ENCODE measurements at regions of chrX and their contacts with region 1.

Region 1: GRCh38 chrX:48631350-48632090 is 34.2 kb downstream of the WDR13 start:
- DNase-seq: peak; percentile 88
- H3K4me3 ChIP-seq: no peak overlapping the region
- H3K27ac ChIP-seq: no peak overlapping the region
- H3K4me1 ChIP-seq: no peaks in the 10 kb centered on the region
- H3K27me3 ChIP-seq: no peaks in the 10 kb centered on the region
- CTCF ChIP-seq: peak; percentile 42 to 51
- POLR2A ChIP-seq: no peak

Region 2: GRCh38 chrX:48883729-48884128 is 252.2 kb after region 1 on chrX:
- CTCF ChIA-PET with region 1: no interaction called
- POLR2A ChIA-PET with region 1: no interaction called
- dilution Hi-C with region 1: no loop called
- intact Hi-C with region 1: no loop called
- DNase-seq: no peak
- H3K4me3 ChIP-seq: no peak overlapping the region
- H3K27ac ChIP-seq: no peak overlapping the region
- H3K4me1 ChIP-seq: no peaks in the 10 kb centered on the region
- H3K27me3 ChIP-seq: no peaks in the 10 kb centered on the region
- CTCF ChIP-seq: no peak
- POLR2A ChIP-seq: no peak

Region 3: GRCh38 chrX:48917139-48918001 is 285.9 kb after region 1 on chrX:
- CTCF ChIA-PET with region 1: no interaction called
- POLR2A ChIA-PET with region 1: no interaction called
- dilution Hi-C with region 1: no loop called
- intact Hi-C with region 1: loop called (anchors 1 kb)
- DNase-seq: peak; percentile 93
- H3K4me3 ChIP-seq: no peak overlapping the region
- H3K27ac ChIP-seq: no peak overlapping the region
- H3K4me1 ChIP-seq: peaks cover 2% of the 10 kb centered on the region
- H3K27me3 ChIP-seq: no peaks in the 10 kb centered on the region
- CTCF ChIP-seq: peak; percentile 91 to 95
- POLR2A ChIP-seq: no peak

Region 4: DNA sequence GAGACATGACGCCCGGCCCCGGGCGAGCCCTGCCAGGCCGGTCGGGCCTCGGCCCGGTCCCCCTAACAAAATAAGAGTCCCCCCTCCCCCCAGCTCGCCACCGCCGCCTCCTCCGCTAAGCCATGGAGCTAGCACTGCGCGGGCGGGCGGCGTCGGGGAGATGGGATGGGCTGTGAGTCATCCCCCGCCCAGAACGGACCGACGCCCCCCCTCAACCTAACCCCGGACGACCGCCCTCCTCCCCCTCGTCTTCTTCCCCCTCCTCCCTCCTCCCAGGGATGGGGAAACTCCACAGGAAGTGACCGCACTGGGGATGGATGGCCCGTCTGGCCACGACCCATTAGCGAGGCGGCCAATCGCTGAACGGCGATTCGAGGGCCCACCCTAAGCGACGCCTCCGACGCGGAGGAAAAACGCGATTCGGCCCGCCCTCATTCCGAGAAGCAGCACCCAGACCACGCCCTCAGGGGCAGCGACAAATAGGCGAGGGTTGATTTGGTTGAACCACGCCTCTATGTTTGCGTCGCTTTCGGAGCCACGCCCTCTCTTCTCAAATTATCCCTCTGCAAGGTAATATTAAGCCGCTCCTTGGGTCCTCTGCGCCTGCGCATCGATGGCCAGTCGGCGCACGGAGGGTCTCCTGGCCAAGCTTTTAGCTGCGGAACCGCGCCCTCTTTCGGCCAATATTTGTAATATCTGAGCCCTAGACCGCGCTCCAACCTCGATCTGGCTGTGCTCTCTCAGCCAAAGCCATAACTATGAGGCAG is 411.9 kb after region 1 on chrX and contains the start of gene TFE3:
- CTCF ChIA-PET with region 1: no interaction called
- POLR2A ChIA-PET with region 1: no interaction called
- dilution Hi-C with region 1: no loop called
- intact Hi-C with region 1: no loop called
- DNase-seq: peak; percentile 99
- H3K4me3 ChIP-seq: peak within 1 kb of the TSS; percentile 66 to 86 (median 70)
- H3K27ac ChIP-seq: peak within 1 kb of the TSS; percentile 86
- H3K4me1 ChIP-seq: peaks cover 33% of the 10 kb centered on the region
- H3K27me3 ChIP-seq: no peaks in the 10 kb centered on the region
- CTCF ChIP-seq: peak; percentile 59
- POLR2A ChIP-seq: peak; percentile 41
- total RNA-seq, gene TFE3: 35.5 and 37.1 TPM in 2 replicates